WTC11 (cell line): ENCODE measurements at regions of chr17 and their contacts with region 1.

Region 1: DNA sequence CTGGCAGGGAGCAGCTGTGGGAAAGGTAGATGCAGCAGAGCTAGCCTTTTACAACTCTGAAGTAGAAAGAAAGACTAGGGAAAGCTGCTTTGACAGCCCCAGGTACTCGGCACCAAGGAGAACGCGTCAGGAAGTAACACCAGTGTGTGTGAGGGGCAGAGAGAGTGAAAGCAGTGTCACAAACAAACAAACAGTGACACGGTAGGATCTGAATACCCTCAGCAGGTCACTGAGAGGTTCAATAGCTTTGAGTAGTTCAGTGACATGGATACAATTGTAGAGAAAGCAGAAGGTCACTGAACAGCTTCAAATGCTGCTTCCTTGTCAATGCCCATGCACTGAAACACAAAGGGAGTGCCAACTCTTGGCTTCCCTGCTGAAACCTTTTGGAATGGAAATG is 150.3 kb upstream of the C17orf78 start:
- DNase-seq: no peak
- ATAC-seq: peak; percentile 79
- H3K4me3 Mint-ChIP-seq: no peak overlapping the region
- H3K27ac Mint-ChIP-seq: peak overlapping the region; percentile 80
- H3K4me1 Mint-ChIP-seq: peaks cover 33% of the 10 kb centered on the region
- H3K27me3 Mint-ChIP-seq: no peaks in the 10 kb centered on the region
- CTCF ChIP-seq: no peak

Region 2: DNA sequence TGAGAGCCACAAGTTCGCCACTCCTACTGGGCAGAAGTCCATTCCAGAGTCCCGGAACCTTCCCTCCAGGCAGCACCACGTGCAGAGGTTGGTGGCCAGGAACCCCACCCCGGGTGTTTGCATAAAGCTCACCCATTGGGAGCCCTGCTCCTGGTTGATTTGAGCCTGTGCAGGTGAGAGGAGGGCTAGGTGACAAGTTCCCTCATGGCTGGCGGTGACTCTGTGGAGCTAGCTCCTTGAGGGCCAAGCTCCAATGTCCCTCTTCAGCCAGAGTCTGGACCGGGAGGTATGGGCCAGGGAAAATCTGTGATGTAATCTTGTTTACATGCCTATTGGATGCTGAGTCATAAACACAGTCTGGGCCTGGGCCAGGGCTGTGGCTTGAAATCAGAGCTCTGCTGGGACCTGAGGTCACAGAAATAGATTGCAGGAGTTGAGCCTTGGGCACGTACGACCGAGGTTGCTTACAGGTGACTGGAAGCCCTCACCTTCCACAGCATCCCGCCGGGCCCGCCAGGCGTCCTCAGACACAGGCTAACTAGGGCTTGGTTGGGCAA is 157.8 kb before region 1 on chr17:
- CTCF ChIA-PET with region 1: no interaction called
- POLR2A ChIA-PET with region 1: no interaction called
- DNase-seq: no peak
- ATAC-seq: peak; percentile 23
- H3K4me3 Mint-ChIP-seq: peak overlapping the region; percentile 63; the same call in 1 of the 2 replicates
- H3K27ac Mint-ChIP-seq: peak overlapping the region; percentile 95
- H3K4me1 Mint-ChIP-seq: peaks cover 59% of the 10 kb centered on the region
- H3K27me3 Mint-ChIP-seq: peaks cover 8% of the 10 kb centered on the region; the same call in 1 of the 2 replicates
- CTCF ChIP-seq: no peak

Region 3: DNA sequence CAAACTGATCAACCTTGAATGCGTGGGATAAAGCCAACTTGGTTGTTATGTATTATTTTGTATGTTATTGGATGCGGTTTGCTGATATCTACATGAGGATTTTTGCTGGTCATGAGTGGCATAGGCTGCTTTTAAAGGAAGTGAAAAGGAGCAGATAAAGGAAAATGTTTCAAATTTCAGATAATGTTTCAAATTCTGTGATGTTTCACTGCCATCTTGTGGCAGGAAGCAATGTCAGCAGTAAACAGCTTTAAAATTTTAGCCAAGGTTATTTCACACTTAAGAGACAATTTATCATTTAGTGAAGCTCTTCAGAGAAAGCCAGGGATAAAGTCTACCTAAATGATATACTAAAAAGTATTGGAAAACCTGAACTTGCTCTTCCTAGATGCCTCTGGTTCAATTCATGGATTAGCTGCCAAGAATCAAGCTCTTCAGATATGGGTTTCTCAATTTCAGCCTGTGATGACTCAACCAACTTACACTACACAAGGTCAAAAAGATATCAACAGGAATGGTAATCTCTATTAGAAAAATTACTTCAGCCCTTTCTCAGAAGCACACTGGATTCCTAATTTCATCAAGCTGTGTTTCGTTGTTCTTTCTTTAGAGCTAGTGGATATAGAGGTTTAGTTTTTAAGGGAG is 14.4 kb after region 1 on chr17:
- CTCF ChIA-PET with region 1: interaction called, 16 read pairs
- POLR2A ChIA-PET with region 1: no interaction called
- DNase-seq: no peak
- ATAC-seq: no peak
- H3K4me3 Mint-ChIP-seq: no peak overlapping the region
- H3K27ac Mint-ChIP-seq: no peak overlapping the region
- H3K4me1 Mint-ChIP-seq: no peaks in the 10 kb centered on the region
- H3K27me3 Mint-ChIP-seq: no peaks in the 10 kb centered on the region
- CTCF ChIP-seq: no peak

Region 4: DNA sequence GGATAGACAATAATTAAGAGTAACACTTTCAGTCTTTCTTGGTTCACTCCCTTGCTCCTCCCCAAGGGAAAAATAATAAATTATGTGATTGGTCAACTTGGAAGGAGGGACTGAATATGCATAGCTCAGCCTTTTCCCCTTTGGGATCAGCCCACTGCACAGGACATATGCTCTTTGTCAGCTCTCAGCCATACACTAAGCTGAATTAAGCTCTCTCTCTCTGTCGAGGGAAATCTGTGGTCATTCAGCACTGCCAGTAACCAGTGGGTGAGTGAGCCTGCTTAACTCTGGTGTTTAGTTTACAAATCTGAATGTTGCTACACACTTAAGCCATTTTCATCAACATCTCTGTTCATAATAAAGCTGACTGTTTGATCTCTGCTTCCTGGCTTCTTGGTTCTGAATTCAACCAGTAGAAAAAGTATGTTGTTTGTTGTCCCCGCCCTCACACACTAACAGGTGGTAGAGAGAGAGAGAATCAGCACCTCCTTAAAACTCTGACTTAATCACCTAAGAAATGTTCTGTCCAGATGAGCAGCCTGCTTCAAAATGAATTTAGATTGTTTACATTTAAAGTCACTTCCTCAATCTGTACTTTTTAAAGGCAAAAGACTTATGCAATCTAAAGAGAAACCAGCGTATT is 48.1 kb after region 1 on chr17:
- CTCF ChIA-PET with region 1: no interaction called
- POLR2A ChIA-PET with region 1: no interaction called
- DNase-seq: no peak
- ATAC-seq: peak; percentile 60
- H3K4me3 Mint-ChIP-seq: no peak overlapping the region
- H3K27ac Mint-ChIP-seq: no peak overlapping the region
- H3K4me1 Mint-ChIP-seq: no peaks in the 10 kb centered on the region
- H3K27me3 Mint-ChIP-seq: no peaks in the 10 kb centered on the region
- CTCF ChIP-seq: no peak